Activated naive CD4-positive, alpha-beta T cell treated with anti-CD3 and anti-CD28 coated beads, Interleukin-2, amount 10 ng/mL, durations not matched to agents 7 days and 5 days (primary cell): ENCODE measurements at regions of chr3 and their contacts with region 1.

Region 1: GRCh38 chr3:36957862-36958686 is 13.2 kb upstream of the TRANK1 start:
- DNase-seq: no peak
- H3K4me3 Mint-ChIP-seq: no peak overlapping the region
- H3K27ac Mint-ChIP-seq: no peak overlapping the region
- H3K4me1 Mint-ChIP-seq: peaks cover 11% of the 10 kb centered on the region
- H3K27me3 Mint-ChIP-seq: peaks cover 4% of the 10 kb centered on the region

Region 2: DNA sequence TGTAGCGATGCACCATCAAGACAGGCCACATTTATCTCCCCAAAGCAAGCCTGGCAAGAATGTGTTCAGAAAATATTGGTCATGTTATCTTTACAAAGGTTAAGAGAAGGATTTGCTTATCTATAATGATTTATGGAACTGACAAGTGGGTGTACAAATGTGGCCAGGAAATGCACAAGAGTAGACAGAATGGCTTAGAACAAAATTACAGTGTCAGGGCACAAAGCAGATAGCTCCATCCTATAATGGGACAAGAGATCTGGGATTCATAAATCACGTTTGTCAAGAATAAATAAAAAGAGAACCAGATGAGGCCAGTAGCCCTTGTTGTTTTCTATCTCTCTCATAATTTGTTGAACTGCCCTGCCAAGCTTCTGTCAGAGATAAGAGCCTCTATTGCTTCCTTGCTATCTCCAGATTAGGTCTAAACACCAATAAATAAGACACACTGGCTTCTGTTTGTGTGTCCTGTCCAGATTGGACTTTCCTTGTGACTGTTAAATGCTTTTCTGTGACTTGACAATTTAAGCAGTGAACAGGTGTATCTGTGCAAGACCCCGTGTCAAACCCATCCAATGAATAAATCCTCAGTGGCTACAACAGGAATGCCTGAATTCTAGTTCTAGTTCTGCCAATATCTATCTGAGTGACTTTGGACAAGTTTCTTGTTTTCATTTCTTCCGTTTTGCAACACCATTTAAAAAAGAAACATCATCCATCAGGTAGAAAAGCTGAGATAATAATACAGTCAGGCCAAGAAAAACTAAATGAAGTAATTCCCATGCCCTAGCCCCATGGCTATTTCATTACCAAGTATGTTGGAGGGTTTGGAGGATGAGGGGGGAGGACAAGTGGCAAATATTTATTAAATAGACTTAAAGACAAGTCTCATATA is 351.0 kb before region 1 on chr3:
- CTCF ChIA-PET with region 1: no interaction called
- DNase-seq: no peak
- H3K4me3 Mint-ChIP-seq: no peak overlapping the region
- H3K27ac Mint-ChIP-seq: no peak overlapping the region
- H3K4me1 Mint-ChIP-seq: no peaks in the 10 kb centered on the region
- H3K27me3 Mint-ChIP-seq: no peaks in the 10 kb centered on the region

Region 3: DNA sequence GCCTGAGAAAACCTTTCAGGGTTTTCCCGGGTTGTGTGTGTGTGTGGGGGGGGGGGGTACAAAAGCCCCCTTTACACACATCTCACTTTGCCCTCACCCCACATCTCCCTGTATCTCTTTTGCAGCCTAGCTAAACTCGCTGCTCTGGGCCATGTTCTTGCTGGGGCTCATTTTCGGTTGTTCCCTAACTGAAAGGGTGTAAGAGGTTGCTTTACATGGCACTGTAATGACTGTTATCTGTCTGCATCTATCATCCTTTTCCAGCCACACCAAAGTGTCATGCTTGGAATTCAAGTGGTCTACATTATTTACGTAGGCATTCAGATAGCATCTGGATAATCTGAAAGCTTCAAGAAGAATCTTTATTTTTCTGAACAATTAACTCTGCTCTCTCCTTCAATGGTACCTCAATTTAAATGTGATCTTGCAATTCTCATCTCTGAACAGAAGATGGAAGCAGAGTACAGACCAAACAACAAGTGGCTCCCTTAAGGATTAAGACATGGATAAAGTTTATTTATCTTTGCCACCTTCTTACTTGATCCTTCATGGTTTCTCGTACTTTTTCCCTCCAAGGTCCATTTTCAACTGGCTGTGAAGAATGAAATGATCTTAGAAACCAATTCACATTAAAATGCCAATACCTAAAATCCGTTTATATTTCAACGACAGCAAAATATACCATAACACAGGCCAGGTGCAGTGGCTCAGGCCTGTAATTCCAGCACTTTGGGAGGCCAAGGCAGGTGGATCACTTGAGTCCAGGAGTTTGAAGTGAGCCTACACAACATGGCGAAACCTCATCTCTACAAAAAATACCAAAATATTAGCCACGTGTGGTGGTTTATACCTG is 228.6 kb before region 1 on chr3:
- CTCF ChIA-PET with region 1: interaction called, 20 read pairs
- DNase-seq: no peak
- H3K4me3 Mint-ChIP-seq: no peak overlapping the region
- H3K27ac Mint-ChIP-seq: no peak overlapping the region
- H3K4me1 Mint-ChIP-seq: no peaks in the 10 kb centered on the region
- H3K27me3 Mint-ChIP-seq: peaks cover 20% of the 10 kb centered on the region

Region 4: DNA sequence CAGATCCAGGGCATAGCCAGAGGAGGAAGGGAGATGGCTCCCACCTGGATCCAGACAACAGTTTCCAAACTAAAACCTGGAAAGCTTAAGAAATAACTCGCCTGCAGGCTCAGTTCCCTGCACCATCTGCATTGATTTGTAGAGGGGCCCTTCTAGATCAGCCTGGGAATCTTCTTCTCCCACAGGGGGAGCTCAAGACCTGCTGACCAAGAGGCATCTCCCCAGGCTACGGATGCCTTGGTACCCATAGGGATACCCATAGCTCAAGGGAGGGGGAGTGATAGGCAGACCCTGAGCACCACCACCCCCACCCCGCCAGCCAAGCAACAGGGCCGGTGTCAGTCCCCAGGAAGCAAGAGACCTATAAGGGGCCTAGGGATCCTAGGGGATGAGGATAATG is 165.7 kb before region 1 on chr3:
- CTCF ChIA-PET with region 1: interaction called, 26 read pairs
- DNase-seq: peak; percentile 35
- H3K4me3 Mint-ChIP-seq: no peak overlapping the region
- H3K27ac Mint-ChIP-seq: no peak overlapping the region
- H3K4me1 Mint-ChIP-seq: no peaks in the 10 kb centered on the region
- H3K27me3 Mint-ChIP-seq: peaks cover 16% of the 10 kb centered on the region

Region 5: GRCh38 chr3:36868614-36869436 is 89.2 kb before region 1 on chr3:
- CTCF ChIA-PET with region 1: interaction called, 23 read pairs
- DNase-seq: peak; percentile 66
- H3K4me3 Mint-ChIP-seq: no peak overlapping the region
- H3K27ac Mint-ChIP-seq: no peak overlapping the region
- H3K4me1 Mint-ChIP-seq: peaks cover 8% of the 10 kb centered on the region
- H3K27me3 Mint-ChIP-seq: no peaks in the 10 kb centered on the region

Region 6: DNA sequence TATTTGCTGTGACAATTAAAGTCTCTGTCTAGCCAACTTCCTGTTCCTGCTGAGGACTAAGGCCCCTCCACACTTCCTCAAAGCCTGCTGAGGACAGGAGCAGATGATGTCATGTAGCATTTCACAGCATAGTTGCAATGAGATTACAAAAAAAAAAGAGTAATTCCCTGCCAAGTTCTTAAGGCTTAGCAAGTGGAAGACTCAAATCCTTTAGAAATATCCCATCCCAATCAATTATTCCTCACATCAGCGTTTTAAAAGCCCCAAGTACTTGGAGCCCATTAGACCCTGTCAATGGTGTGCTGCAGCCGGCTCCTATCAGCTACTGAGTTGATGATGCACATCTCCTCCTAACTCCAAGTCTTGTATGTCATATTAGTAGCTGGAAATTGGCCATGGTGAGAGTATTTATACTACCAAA is 64.9 kb before region 1 on chr3:
- CTCF ChIA-PET with region 1: interaction called, 15 read pairs
- DNase-seq: no peak
- H3K4me3 Mint-ChIP-seq: no peak overlapping the region
- H3K27ac Mint-ChIP-seq: peak overlapping the region; percentile 49
- H3K4me1 Mint-ChIP-seq: peaks cover 42% of the 10 kb centered on the region
- H3K27me3 Mint-ChIP-seq: no peaks in the 10 kb centered on the region

Region 7: DNA sequence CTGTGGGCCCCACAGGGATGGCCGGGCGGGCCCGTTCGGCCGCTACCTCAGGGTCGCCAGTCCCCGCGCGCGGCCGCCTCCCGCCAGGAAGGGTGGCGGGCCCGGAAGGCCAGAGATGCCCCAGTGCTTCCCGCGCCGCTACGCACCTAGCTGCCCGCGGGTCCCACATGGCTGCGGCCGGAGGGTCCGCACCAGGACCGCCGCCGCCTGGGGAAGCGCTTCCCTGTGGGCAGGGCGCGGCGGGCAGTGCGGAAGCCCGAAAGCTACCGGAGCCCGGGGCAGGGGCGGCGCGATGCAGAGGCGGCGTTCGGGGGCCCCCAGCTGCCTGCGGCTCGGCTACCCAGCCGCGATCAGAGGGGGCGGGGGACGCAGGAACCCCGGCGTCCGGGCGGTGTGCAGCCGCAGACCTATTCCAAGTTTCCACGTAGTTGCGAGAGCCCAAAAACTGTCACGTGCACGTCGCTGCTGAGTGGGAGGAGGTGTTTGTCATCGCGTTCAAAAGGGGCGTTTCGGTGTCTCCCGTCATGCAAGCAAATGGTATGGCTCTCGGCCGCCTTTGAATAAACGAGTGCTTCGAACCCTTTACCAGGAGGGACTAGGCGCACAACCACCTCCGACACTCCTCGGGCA is 13.3 kb before region 1 on chr3 and contains the start of gene TRANK1:
- CTCF ChIA-PET with region 1: interaction called, 10 read pairs
- DNase-seq: peak; percentile 88
- H3K4me3 Mint-ChIP-seq: peak within 1 kb of the TSS; percentile 77
- H3K27ac Mint-ChIP-seq: peak within 1 kb of the TSS; percentile 68
- H3K4me1 Mint-ChIP-seq: peaks cover 18% of the 10 kb centered on the region
- H3K27me3 Mint-ChIP-seq: peaks cover 20% of the 10 kb centered on the region